Pancreas (tissue), 10 donors: ENCODE measurements at regions of chr19 and their contacts with region 1.

Region 1: DNA sequence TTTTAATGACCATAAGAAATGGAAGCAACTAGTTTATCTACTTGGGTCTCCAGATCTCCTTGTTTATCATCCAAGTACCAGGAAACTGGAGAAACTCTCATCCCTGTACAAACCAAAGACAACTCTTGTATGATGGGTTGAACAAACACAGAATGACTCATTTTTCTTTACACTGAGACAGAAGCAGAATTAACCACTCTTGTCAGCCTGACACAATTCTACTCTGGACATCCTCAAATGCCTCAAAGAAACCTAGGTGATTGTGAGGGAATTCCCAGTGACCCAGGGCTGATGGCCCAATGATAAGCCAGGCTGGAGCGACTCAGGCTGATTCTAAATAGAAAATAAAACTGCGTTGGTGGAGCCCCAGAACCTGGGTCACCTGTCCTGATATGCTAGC is 151.5 kb downstream of the ZNF737 start:
- DNase-seq: no peak
- ATAC-seq: no peak
- H3K4me3 ChIP-seq: no peak overlapping the region
- H3K27ac ChIP-seq: no peak overlapping the region
- H3K4me1 ChIP-seq: no peaks in the 10 kb centered on the region
- H3K27me3 ChIP-seq: no peaks in the 10 kb centered on the region
- CTCF ChIP-seq: no peak

Region 2: GRCh38 chr19:20397292-20397691 is 16.8 kb before region 1 on chr19:
- intact Hi-C with region 1: no loop called
- DNase-seq: no peak
- ATAC-seq: no peak
- H3K4me3 ChIP-seq: no peak overlapping the region
- H3K27ac ChIP-seq: no peak overlapping the region
- H3K4me1 ChIP-seq: no peaks in the 10 kb centered on the region
- H3K27me3 ChIP-seq: no peaks in the 10 kb centered on the region
- CTCF ChIP-seq: no peak

Region 3: GRCh38 chr19:20565321-20566018 is 151.3 kb after region 1 on chr19 and contains the start of gene ZNF737:
- intact Hi-C with region 1: no loop called
- DNase-seq: peak; percentile 97 to 100 (median 99)
- ATAC-seq: peak; percentile 93 to 98 (median 96)
- H3K4me3 ChIP-seq: peak within 1 kb of the TSS; percentile 51 to 77 (median 57)
- H3K27ac ChIP-seq: peak within 1 kb of the TSS; percentile 69 to 95 (median 92)
- H3K4me1 ChIP-seq: peaks cover 0 to 34% (median 0%) of the 10 kb centered on the region in 3 donors
- H3K27me3 ChIP-seq: no peaks in the 10 kb centered on the region
- CTCF ChIP-seq: peak in 1 of 4 donors; percentile 7
- total RNA-seq, gene ZNF737: 7.1 to 25.3 (median 9.8) TPM

Region 4: DNA sequence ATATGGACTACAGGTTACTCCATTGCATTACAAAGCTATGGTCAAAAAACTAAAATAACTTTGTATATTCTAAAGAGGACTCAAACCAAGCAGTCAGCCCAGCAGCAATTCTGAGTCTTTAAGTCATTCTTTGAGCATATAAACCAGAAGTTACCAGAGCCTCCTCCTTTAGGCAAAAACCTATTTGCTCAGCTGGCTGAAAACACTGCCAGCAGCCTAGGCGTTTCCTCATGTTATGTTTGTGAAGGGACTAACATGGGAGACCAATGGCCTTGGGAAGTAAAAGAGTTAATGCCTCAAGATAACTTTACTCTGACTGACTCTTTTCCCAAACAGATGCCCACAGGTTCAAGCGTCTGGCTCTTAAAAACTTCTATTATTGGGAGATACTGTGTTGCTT is 201.9 kb after region 1 on chr19:
- intact Hi-C with region 1: loop called in 1 of 3 experiments (anchors 10 kb)
- DNase-seq: peak in 2 of 6 donors; percentile 29 to 55
- ATAC-seq: peak in 3 of 4 donors; percentile 11 to 36 (median 13)
- H3K4me3 ChIP-seq: no peak overlapping the region
- H3K27ac ChIP-seq: peak overlapping the region in 1 of 4 donors; percentile 85
- H3K4me1 ChIP-seq: peaks cover 0 to under 1% (median 0%) of the 10 kb centered on the region in 3 donors
- H3K27me3 ChIP-seq: no peaks in the 10 kb centered on the region
- CTCF ChIP-seq: no peak